ENCODE measurements at regions of chr6 and their contacts with region 1.

Region 1: GRCh38 chr6:144149891-144150709 is at the start of gene STX11:
- DNase-seq: peak; percentile 85
- H3K4me3 Mint-ChIP-seq: peak within 1 kb of the TSS; percentile 89
- H3K27ac Mint-ChIP-seq: peak within 1 kb of the TSS; percentile 99
- H3K4me1 Mint-ChIP-seq: peaks cover 45% of the 10 kb centered on the region
- H3K27me3 Mint-ChIP-seq: peaks cover 7% of the 10 kb centered on the region
- total RNA-seq, gene STX11: 23.8 to 25.0 TPM

Region 2: GRCh38 chr6:144063744-144064401 is 86.2 kb before region 1 on chr6:
- CTCF ChIA-PET with region 1: interaction called, 5 read pairs
- POLR2A ChIA-PET with region 1: interaction called, 22 read pairs
- DNase-seq: peak; percentile 93
- H3K4me3 Mint-ChIP-seq: peak overlapping the region; percentile 79
- H3K27ac Mint-ChIP-seq: peak overlapping the region; percentile 58
- H3K4me1 Mint-ChIP-seq: peaks cover 46% of the 10 kb centered on the region
- H3K27me3 Mint-ChIP-seq: peaks cover 13% of the 10 kb centered on the region

Region 3: GRCh38 chr6:144119376-144119775 is 30.7 kb before region 1 on chr6:
- CTCF ChIA-PET with region 1: no interaction called
- POLR2A ChIA-PET with region 1: no interaction called
- DNase-seq: no peak
- H3K4me3 Mint-ChIP-seq: no peak overlapping the region
- H3K27ac Mint-ChIP-seq: no peak overlapping the region
- H3K4me1 Mint-ChIP-seq: no peaks in the 10 kb centered on the region
- H3K27me3 Mint-ChIP-seq: peaks cover 2% of the 10 kb centered on the region

Region 4: GRCh38 chr6:144131248-144131709 is 18.8 kb before region 1 on chr6:
- CTCF ChIA-PET with region 1: no interaction called
- POLR2A ChIA-PET with region 1: interaction called, 17 read pairs
- DNase-seq: no peak
- H3K4me3 Mint-ChIP-seq: no peak overlapping the region
- H3K27ac Mint-ChIP-seq: no peak overlapping the region
- H3K4me1 Mint-ChIP-seq: peaks cover 17% of the 10 kb centered on the region
- H3K27me3 Mint-ChIP-seq: peaks cover 18% of the 10 kb centered on the region

Region 5: DNA sequence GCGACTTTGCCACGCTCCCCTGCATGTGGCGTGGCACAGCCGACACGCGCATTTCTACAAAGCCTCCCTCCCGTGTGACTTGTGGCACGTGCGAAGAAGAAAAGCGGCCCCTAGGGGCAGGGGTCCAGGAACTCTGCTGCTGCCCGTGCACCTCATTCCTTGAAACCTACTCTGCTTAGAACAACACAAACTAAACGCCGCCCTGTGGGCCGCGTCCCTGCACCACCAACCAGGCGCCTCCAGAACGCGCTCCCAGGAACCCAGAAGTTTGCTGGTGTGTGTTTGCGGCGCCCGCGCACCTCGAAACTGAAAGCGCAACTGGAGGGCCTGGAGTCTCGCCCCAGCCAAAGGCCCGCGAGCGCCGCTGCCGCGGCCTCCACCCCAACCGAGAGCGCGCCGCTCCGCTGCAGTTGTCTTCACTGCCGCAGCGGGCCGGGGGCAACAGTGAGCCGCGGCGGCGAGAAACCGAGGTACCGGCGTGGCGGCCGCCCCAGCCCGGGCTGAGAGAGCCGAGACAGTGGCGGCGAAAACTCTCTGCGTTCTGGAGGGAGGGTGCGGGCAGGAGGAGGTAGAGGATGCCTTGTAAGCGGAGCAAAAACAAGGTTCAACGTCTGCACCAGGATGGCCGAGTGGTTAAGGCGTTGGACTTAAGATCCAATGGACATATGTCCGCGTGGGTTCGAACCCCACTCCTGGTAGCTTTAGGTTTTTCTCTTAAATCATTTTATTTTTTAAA is 66.0 kb after region 1 on chr6:
- CTCF ChIA-PET with region 1: interaction called, 4 read pairs
- POLR2A ChIA-PET with region 1: interaction called, 29 read pairs
- DNase-seq: peak; percentile 93
- H3K4me3 Mint-ChIP-seq: peak overlapping the region; percentile 83
- H3K27ac Mint-ChIP-seq: peak overlapping the region; percentile 97
- H3K4me1 Mint-ChIP-seq: peaks cover 38% of the 10 kb centered on the region
- H3K27me3 Mint-ChIP-seq: peaks cover 1% of the 10 kb centered on the region

Region 6: DNA sequence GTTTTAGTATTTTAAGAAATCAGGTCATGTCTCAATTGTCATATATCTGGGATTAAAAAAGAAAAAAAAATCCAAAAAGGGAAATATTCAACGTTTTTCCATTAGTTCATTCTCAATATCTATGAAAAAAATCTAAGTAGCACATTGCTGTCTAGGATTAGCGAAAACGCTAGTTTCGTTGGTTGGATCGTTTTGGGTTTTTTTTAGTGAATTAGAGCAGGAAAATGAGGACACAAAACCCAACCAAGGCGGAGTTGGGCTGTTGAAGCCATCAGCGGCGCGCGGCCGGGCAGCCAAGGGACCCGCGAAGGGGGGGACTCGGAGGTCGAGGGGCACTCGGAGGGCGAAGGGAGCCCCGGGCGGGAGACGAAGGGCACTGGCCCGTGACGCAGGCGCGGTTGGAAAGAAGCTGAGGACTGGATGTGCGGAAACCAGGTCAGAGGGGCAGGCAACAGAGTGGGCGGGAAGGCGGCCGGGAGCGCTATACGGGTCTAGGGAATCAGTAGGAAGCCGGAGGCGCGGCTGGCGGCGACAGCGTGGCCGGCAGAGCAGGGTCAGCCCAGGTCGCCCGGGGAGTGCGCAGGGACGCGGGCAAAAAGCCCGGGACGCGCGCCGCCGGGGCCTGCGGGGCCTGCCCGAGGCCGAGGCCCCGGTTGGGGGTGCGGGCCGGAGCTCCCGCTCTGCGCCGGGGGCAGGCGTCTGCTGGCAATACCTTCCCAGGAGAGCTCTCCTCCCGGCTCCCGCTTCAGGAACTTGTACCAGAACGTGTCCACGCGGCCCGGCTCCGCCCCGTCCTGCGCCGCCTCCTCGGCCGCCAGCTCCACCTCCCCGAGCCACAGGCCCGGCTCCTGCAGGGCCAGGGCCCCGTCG is 1584.6 kb after region 1 on chr6:
- CTCF ChIA-PET with region 1: no interaction called
- POLR2A ChIA-PET with region 1: no interaction called
- DNase-seq: peak; percentile 71
- H3K4me3 Mint-ChIP-seq: peak overlapping the region; percentile 90
- H3K27ac Mint-ChIP-seq: peak overlapping the region; percentile 88
- H3K4me1 Mint-ChIP-seq: peaks cover 21% of the 10 kb centered on the region
- H3K27me3 Mint-ChIP-seq: no peaks in the 10 kb centered on the region